ENCODE measurements at regions of chr2 and their contacts with region 1.

Region 1: DNA sequence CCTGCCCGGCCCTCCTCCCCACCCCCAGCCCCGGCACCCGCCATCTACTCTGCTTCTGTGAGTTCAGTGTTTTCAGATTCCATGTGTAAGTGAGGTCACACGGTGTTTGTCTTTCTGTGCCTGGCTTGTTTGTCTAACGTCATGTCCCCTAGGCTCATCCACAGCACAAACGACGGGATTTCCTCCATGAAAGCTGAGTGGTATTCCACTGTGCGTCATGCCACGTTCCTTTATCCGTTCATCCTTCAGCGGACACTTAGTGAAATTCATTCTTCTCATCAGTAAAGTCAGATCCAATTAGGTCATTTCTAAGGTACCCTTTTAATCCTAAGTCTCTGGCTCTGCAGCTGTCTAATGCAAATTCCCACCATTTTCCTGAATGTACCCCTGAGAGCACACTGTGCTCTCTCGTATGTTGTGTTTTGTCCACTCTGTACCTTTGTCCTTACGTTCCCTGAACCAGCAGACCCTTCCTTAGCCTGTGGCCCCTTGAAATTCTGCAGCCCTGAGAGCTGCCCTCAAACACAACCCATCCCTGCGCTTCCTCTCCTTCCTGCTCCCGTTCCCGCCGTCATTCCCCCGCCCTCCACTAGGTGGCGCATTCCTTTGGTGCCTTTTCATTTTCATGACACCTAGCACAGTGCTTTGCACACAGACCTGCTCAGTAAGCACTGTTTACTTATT is 44.1 kb downstream of the TRAPPC12 start:
- DNase-seq: peak; percentile 58 to 75
- H3K4me3 ChIP-seq: no peak overlapping the region
- H3K27ac ChIP-seq: no peak overlapping the region
- H3K4me1 ChIP-seq: no peaks in the 10 kb centered on the region
- H3K27me3 ChIP-seq: no peaks in the 10 kb centered on the region
- CTCF ChIP-seq: peak; percentile 84 to 98

Region 2: GRCh38 chr2:3594493-3595281 is 171.1 kb after region 1 on chr2 and contains the start of gene COLEC11:
- intact Hi-C with region 1: no loop called
- DNase-seq: peak in 1 of 2 donors; percentile 24
- H3K4me3 ChIP-seq: peak within 1 kb of the TSS in 1 of 2 donors; percentile 18
- H3K27ac ChIP-seq: no peak within 1 kb of the TSS
- H3K4me1 ChIP-seq: peaks cover 0 to 7% (median 0%) of the 10 kb centered on the region in 4 donors
- H3K27me3 ChIP-seq: no peaks in the 10 kb centered on the region
- CTCF ChIP-seq: no peak

Region 3: DNA sequence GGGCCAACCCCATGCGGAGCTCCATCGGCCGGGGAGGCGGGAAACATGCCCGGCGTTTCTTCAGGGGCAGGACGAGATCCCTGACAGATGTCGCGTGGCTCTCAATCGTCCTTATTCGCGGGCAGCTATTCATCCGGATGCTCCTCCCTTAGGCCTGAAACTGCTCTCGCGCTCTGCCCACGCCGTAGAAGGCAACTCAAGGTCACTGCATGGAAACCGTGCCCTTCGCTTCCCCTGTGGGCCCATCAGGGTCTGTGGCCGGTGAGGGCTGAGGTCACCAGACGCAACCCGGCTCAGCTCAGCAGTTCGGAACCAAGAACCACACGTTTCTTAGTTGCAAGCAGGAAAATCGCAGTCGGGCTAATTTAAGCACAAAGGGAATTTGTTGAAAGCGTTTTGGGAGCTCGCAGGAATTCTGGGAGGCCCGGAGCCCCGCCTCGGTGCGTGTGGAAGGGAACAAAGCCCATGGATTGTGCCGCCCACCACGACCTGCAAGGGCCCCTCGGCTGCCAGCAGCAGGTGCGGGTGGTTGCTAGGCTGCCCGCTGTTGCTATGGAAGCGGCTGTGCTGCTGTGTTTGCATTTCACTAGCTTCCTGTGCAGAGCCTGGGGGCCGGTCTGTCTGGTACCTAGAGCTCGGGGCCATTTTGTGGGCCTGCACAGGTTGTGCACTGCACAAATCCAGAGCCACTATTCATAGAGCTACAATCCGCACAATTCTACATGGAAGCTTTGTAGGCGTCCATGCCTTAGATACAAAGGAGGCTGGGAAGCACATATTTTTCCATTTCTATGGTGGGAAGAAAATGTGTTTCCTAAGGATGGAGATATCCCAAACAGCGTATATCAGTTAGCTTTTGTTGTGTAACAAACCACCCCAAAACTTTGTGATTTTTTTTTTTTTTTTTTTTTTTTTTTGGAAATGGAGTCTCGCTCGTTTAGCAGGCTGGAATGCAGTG is 228.3 kb after region 1 on chr2:
- intact Hi-C with region 1: loop called (anchors 2 kb)
- DNase-seq: no peak
- H3K4me3 ChIP-seq: peak overlapping the region; percentile 6 to 30
- H3K27ac ChIP-seq: peak overlapping the region in 1 of 2 donors; percentile 29
- H3K4me1 ChIP-seq: peaks cover 0 to 13% (median 5%) of the 10 kb centered on the region in 4 donors
- H3K27me3 ChIP-seq: peaks cover 0 to 10% of the 10 kb centered on the region in 2 donors
- CTCF ChIP-seq: no peak

Region 4: DNA sequence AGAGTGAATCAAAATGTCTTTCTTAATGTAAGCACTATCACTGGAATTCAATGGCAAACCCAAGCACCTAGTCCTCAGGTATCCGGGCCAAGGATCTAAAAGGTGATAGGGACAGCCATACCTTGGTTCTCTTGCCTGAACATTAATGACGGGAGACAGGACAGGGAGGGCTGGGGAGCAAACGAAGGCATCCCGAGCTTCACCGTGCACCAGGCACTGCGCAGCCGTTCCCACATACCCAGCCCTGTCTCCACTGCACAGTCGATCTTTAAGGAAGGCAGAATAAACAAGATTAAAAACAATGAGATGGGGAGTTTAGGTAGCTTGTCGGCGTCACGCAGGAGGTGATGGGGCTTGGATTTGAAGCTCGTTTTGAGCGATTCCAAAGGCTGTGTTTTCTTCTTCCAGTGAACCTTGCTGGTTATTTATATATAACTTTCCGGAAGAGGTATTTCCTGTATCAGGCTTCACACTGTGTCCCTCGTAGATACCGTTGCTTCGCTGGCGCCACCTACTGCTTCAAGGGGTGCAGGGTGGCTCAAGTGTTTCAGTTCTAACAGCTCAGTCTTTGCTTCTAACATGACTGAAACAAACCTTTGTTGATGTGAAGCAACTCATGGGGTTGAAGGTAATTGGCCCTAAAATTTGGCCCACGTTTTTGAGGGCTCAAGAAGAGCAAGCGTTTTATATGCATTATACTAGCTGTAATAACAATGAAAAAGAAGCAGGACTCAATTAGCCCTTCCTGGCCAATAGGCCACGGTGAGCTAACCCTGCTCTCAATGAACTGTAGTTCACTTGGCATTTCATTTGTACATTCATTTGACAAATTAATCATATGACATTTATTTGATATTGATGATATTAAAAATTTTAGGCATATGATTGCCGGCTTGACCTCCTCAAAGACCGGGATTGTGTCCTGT is 357.1 kb after region 1 on chr2:
- intact Hi-C with region 1: no loop called
- DNase-seq: no peak
- H3K4me3 ChIP-seq: no peak overlapping the region
- H3K27ac ChIP-seq: no peak overlapping the region
- H3K4me1 ChIP-seq: no peaks in the 10 kb centered on the region
- H3K27me3 ChIP-seq: peaks cover 0 to 3% of the 10 kb centered on the region in 2 donors
- CTCF ChIP-seq: peak; percentile 26 to 32

Measured in tibial artery (tissue), 4 donors.